Right cardiac atrium (tissue), 5 donors: ENCODE measurements at regions of chr11 and their contacts with region 1.

Region 1: GRCh38 chr11:75241036-75241905 is 697 bp downstream of the TPBGL start:
- DNase-seq: peak; percentile 83 to 94 (median 94)
- ATAC-seq: peak; percentile 89 to 92
- H3K4me3 ChIP-seq: peak overlapping the region; percentile 34
- H3K27ac ChIP-seq: no peak overlapping the region
- H3K4me1 ChIP-seq: no peaks in the 10 kb centered on the region
- H3K27me3 ChIP-seq: no peaks in the 10 kb centered on the region

Region 2: GRCh38 chr11:74929431-74930363 is 311.6 kb before region 1 on chr11:
- intact Hi-C with region 1: loop called in 3 of 4 experiments (anchors 5 to 10 kb)
- DNase-seq: peak in 2 of 3 donors; percentile 53 to 79
- ATAC-seq: peak; percentile 85 to 87
- H3K4me3 ChIP-seq: no peak overlapping the region
- H3K27ac ChIP-seq: no peak overlapping the region
- H3K4me1 ChIP-seq: no peaks in the 10 kb centered on the region
- H3K27me3 ChIP-seq: no peaks in the 10 kb centered on the region

Region 3: DNA sequence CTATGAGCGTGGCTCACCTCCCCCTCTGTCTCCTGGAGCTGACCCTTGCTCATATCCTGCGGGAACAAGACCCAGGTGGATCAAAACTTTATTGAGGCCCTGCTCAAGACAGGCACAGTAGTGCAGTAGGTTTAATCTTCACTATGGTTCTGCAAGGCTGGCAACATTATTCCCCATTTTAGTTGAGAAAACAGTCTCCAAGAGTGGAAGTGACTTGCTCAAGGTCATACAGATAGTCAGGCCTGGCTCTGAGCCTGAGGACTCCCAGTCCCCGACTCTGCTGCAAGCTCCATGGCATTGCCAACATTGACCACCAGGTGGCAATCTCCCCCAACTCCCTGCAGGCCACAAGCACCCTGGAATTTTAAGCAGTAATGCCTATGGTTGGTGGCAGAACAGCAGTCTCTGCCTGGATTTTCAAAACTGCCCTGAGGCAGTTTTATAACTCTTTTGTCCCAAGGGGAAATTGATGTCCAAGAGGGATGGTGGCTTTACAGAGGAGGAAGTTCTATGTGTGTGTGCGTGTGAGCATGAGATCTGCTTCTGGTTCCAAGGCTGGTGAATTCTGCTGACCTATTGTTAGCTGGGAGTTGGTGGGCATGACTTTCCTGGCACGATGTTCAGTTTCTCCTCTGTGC is 218.4 kb before region 1 on chr11:
- intact Hi-C with region 1: loop called in 3 of 4 experiments (anchors 5 to 10 kb)
- DNase-seq: peak; percentile 72 to 90 (median 87)
- ATAC-seq: peak; percentile 79 to 91
- H3K4me3 ChIP-seq: no peak overlapping the region
- H3K27ac ChIP-seq: peak overlapping the region; percentile 25
- H3K4me1 ChIP-seq: peaks cover 2% of the 10 kb centered on the region
- H3K27me3 ChIP-seq: no peaks in the 10 kb centered on the region

Region 4: DNA sequence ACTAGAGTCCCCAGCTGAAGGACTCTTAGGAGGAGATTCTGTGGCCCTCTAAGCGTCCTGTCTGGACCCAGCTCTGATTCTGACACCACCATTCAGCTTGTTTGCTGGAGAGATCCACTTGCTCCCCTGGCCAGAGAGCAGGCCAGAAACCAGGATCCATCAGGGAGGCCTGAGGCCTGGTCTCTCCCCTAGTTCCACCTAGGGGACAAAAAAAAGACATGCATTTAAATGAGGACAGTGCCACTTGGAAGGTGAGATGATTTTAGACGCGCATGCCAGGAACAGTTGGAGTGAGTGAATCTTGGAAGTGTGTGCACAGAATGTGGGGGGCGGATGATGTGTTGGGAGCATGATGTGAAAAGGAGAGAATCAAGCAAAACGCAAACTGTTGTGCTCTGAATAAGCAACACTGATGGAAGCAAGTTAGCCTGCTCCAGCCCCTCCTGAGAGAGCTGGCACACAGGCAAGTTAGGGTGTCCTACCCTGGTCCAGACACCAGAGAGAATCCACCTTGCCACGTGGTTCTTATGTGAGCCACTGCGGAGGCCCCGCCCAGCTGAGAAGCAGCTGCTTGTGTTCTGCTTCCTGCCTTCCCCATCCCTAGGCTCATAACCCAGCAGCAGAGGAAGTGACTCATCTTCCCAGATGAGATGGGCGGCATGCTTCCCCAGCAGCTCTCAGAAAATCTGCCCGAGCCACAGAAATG is 98.4 kb before region 1 on chr11:
- intact Hi-C with region 1: loop called (anchors 2 to 5 kb)
- DNase-seq: peak; percentile 80 to 90 (median 87)
- ATAC-seq: peak; percentile 85 to 95
- H3K4me3 ChIP-seq: no peak overlapping the region
- H3K27ac ChIP-seq: no peak overlapping the region
- H3K4me1 ChIP-seq: peaks cover 3% of the 10 kb centered on the region
- H3K27me3 ChIP-seq: no peaks in the 10 kb centered on the region

Region 5: GRCh38 chr11:75160192-75160757 is 81.0 kb before region 1 on chr11:
- intact Hi-C with region 1: no loop called
- DNase-seq: no peak
- ATAC-seq: peak in 1 of 2 donors; percentile 27
- H3K4me3 ChIP-seq: no peak overlapping the region
- H3K27ac ChIP-seq: peak overlapping the region; percentile 25
- H3K4me1 ChIP-seq: peaks cover 10% of the 10 kb centered on the region
- H3K27me3 ChIP-seq: no peaks in the 10 kb centered on the region

Region 6: DNA sequence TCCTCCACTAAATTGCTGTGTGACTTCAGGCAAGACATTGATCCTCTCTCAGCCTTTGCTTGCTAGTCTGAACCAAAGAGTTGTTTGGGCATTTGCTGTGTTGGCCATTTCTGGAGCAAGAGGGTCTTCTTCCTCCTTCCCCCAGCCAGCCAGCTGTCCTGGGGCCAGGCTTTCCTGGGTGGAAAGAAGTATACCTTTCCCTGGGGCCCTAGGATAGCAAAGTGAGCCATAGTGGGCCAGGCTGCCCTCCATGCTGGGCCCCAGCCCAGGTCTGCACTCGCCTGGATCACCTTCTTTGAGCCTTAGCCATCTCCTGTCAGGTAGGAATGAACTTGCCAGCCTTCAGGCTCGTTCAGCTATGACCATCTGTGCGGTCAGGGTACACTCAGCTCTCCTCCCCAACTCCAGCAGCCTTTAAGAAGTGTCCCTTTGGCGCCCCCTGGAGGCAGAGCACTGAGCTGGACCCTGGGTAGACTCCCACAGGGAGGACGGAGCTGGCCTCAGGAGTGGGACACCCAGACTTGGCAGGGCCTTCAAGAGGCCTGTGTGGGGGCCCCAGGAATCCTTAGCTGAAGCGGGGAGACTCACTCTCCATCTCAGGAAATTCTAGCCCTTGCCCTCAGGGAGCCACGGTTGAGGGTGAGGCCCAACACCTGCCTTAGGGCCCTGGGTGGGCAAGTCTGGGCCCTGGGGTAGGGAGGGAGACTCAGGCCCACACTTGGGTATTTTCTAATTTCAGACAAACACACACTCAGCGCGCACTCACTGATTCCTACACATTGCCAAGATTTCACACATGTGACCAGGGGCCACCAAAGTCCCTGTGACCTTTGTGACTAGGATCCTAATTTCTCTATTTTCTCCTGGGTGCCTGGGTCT is 36.3 kb before region 1 on chr11:
- intact Hi-C with region 1: loop called in 1 of 4 experiments (anchors 5 kb)
- DNase-seq: peak; percentile 89 to 97 (median 95)
- ATAC-seq: peak; percentile 91 to 93
- H3K4me3 ChIP-seq: no peak overlapping the region
- H3K27ac ChIP-seq: no peak overlapping the region
- H3K4me1 ChIP-seq: no peaks in the 10 kb centered on the region
- H3K27me3 ChIP-seq: no peaks in the 10 kb centered on the region